Activated B cell treated with CpG ODN at 0.5 μM for 24 hours (primary cell): ENCODE measurements at regions of chr6 and their contacts with region 1.

Region 1: DNA sequence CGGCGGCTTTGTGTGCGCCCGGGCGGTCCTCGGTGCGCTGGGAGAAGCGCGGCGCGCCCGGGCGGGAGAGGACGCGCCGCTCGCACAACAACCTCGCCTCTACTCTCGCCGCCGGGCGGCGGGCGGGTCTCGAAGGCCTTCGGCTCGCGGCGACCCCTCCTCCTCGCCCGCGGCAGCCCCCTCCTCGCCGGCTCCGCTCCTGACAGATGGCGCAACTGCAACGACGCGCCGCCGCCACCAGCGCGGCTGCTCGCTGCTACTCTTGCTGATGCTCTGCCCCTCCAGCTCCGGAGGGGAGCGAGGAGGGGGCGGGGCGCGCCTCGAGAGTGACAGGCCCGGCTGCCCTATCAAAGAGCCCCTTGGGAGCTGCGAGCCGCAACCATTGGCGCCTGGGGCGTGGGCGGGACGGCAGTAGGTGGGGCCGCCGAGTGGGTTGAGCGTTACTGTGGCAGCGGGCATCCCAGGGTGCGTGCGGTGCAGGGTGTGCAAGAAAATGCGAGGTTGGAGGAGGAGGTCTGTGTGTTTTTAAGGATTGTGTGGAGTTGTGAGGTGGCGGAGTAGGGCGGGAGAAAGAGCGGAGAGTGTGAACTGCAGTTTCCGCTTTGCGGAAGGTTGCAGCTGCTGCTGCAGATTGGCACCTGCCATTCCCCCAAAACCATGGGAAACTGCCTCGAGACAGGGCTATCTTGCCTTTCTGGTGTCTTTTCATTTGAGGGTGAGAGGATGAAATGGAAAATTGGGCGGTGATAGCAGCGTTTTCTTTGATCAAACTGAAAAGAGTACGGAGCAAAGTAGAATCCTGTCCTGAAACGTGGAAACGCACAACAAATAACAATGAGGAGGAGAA is at the start of gene FYN:
- DNase-seq: peak; percentile 97
- ATAC-seq: peak; percentile 94
- H3K4me3 Mint-ChIP-seq: peak within 1 kb of the TSS; percentile 93
- H3K27ac Mint-ChIP-seq: peak within 1 kb of the TSS; percentile 90
- H3K4me1 Mint-ChIP-seq: peaks cover 44% of the 10 kb centered on the region
- H3K27me3 Mint-ChIP-seq: no peaks in the 10 kb centered on the region
- CTCF ChIP-seq: no peak
- total RNA-seq, gene FYN: 57.8 and 64.7 TPM in 2 replicates

Region 2: GRCh38 chr6:111259089-111259831 is 614.1 kb before region 1 on chr6:
- CTCF ChIA-PET with region 1: no interaction called
- POLR2A ChIA-PET with region 1: no interaction called
- intact Hi-C with region 1: loop called (anchors 1 kb)
- DNase-seq: peak; percentile 97
- ATAC-seq: peak; percentile 93
- H3K4me3 Mint-ChIP-seq: peak overlapping the region; percentile 84
- H3K27ac Mint-ChIP-seq: peak overlapping the region; percentile 87
- H3K4me1 Mint-ChIP-seq: peaks cover 30% of the 10 kb centered on the region
- H3K27me3 Mint-ChIP-seq: no peaks in the 10 kb centered on the region
- CTCF ChIP-seq: peak; percentile 89

Region 3: DNA sequence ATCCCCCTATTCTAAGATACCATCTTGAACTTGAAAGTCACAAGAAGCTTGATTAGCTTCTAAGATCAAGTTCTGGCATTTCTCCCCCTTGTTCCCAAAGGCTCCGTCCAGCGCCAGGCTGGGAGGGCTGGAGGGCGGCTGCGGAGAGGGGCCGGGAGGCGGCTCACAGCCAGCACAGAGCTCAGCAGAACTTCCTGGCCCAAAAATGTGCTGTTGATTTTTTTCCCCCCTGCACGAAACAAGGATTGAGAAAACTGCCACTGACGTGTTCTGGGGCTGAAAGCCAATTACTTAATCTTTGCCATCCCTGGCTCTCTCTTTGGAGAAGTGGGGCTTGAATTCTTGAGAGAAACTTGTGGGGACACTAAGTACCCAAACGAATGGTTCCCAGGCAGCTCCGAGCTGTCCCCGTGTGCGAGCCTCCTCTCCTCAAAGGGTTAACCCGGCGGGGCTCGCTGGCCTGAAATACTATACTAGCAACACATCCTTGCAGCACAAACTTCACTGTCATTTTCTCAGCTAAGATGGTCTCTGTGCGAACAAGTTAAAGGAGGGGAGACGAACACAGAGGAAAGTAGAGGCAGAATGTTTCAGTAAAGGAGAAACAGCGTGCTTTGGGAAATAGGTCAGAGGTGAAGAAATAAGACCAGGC is 268.2 kb before region 1 on chr6:
- CTCF ChIA-PET with region 1: no interaction called
- POLR2A ChIA-PET with region 1: interaction called, 3 read pairs
- intact Hi-C with region 1: loop called (anchors 10 kb)
- DNase-seq: peak; percentile 23
- ATAC-seq: peak; percentile 43
- H3K4me3 Mint-ChIP-seq: peak overlapping the region; percentile 90
- H3K27ac Mint-ChIP-seq: peak overlapping the region; percentile 92
- H3K4me1 Mint-ChIP-seq: peaks cover 44% of the 10 kb centered on the region
- H3K27me3 Mint-ChIP-seq: no peaks in the 10 kb centered on the region
- CTCF ChIP-seq: no peak

Region 4: GRCh38 chr6:111721753-111722154 is 151.6 kb before region 1 on chr6:
- CTCF ChIA-PET with region 1: interaction called, 3 read pairs
- POLR2A ChIA-PET with region 1: no interaction called
- intact Hi-C with region 1: loop called (anchors 2 kb)
- DNase-seq: no peak
- ATAC-seq: peak; percentile 43
- H3K4me3 Mint-ChIP-seq: no peak overlapping the region
- H3K27ac Mint-ChIP-seq: peak overlapping the region; percentile 7
- H3K4me1 Mint-ChIP-seq: peaks cover 45% of the 10 kb centered on the region
- H3K27me3 Mint-ChIP-seq: no peaks in the 10 kb centered on the region
- CTCF ChIP-seq: no peak

Region 5: DNA sequence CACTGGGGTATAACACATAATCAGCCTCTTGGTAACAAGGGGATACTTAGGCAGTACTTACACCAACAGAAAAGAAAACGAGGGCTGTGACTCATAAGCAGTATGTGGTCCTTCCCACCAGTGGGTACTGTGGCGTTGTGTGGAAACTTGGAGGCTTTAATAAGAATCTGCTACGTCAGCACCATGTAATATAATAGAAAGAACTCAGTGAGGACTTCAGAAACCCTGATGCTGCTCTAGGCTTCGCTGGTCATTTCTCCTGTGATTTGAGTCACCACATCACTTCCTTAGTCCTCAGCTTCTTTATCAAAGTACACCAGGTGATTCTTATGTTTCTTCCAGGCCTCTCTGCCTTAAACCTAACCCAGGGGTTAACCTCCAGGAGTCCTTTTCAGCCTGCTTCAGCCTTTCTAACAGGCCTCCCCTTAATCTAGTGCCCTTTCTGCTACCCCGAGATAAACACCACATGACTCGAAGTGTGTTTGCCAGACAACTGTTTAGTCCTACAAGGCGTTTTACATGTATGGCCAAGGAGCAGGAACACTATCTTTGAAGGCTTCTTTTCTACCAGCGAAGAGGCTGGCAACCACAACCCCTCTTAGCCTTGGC is 68.7 kb before region 1 on chr6:
- CTCF ChIA-PET with region 1: interaction called, 9 read pairs
- POLR2A ChIA-PET with region 1: interaction called, 10 read pairs
- intact Hi-C with region 1: loop called (anchors 1 kb)
- DNase-seq: no peak
- ATAC-seq: peak; percentile 69
- H3K4me3 Mint-ChIP-seq: peak overlapping the region; percentile 55
- H3K27ac Mint-ChIP-seq: peak overlapping the region; percentile 90
- H3K4me1 Mint-ChIP-seq: peaks cover 53% of the 10 kb centered on the region
- H3K27me3 Mint-ChIP-seq: no peaks in the 10 kb centered on the region
- CTCF ChIP-seq: no peak

Region 6: DNA sequence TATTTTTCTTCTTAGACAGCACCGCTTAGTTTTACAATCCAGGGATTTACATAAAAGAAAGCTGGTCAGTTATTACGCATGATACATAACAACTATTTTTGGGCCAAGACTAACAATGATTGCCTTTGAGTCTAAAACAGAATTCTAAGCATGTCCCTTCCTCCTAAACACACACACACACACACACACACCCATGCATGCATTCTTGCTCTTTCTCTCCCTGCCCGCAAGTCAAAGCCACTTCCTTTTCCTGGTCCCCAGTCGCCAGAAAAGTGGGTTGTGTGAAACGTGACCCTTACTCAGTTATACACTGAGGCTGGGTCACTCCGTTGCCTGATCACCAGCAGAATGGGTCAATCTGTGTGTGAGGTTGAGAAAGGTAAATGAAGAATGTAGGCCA is 31.6 kb before region 1 on chr6:
- CTCF ChIA-PET with region 1: interaction called, 6 read pairs
- POLR2A ChIA-PET with region 1: interaction called, 16 read pairs
- intact Hi-C with region 1: loop called (anchors 1 kb)
- DNase-seq: no peak
- ATAC-seq: no peak
- H3K4me3 Mint-ChIP-seq: no peak overlapping the region
- H3K27ac Mint-ChIP-seq: no peak overlapping the region
- H3K4me1 Mint-ChIP-seq: peaks cover 24% of the 10 kb centered on the region
- H3K27me3 Mint-ChIP-seq: no peaks in the 10 kb centered on the region
- CTCF ChIP-seq: no peak

Region 7: DNA sequence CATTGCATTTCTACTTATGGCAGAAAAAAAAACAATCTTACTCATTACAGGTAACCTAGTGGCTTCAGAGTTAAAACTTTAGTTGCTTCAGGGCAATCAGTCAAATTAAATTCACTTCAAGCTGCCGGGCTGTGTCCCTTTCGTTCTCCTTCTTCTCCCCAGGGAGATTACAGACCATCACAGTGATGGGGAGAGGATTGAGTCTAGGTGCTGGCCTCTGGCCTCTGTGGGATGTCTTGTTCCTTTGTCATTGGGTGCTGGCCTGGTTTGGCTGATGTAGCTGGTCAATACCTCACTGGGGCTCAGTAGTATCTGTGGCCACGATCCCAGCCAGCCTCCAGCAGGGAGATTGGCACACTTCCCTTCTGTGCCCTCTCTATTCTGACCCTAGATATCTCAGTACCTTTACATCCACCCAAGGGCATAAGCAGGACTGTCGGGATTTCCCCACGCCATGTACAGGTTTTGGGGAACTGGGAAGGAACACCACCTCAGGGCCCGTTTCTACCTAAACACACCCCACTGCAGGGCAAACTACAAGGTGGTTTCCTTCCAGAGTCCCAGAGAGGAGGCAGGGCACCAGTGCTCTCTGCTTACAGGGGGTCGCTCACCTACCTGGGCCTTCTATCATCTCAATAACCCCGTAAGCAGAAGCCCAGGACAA is 15.6 kb before region 1 on chr6:
- CTCF ChIA-PET with region 1: no interaction called
- POLR2A ChIA-PET with region 1: no interaction called
- intact Hi-C with region 1: no loop called
- DNase-seq: no peak
- ATAC-seq: no peak
- H3K4me3 Mint-ChIP-seq: no peak overlapping the region
- H3K27ac Mint-ChIP-seq: no peak overlapping the region
- H3K4me1 Mint-ChIP-seq: peaks cover 17% of the 10 kb centered on the region
- H3K27me3 Mint-ChIP-seq: no peaks in the 10 kb centered on the region
- CTCF ChIP-seq: no peak

Region 8: GRCh38 chr6:111894272-111894671 is 20.9 kb after region 1 on chr6:
- CTCF ChIA-PET with region 1: no interaction called
- POLR2A ChIA-PET with region 1: no interaction called
- intact Hi-C with region 1: no loop called
- DNase-seq: no peak
- ATAC-seq: no peak
- H3K4me3 Mint-ChIP-seq: no peak overlapping the region
- H3K27ac Mint-ChIP-seq: no peak overlapping the region
- H3K4me1 Mint-ChIP-seq: no peaks in the 10 kb centered on the region
- H3K27me3 Mint-ChIP-seq: peaks cover 2% of the 10 kb centered on the region
- CTCF ChIP-seq: no peak

Region 9: DNA sequence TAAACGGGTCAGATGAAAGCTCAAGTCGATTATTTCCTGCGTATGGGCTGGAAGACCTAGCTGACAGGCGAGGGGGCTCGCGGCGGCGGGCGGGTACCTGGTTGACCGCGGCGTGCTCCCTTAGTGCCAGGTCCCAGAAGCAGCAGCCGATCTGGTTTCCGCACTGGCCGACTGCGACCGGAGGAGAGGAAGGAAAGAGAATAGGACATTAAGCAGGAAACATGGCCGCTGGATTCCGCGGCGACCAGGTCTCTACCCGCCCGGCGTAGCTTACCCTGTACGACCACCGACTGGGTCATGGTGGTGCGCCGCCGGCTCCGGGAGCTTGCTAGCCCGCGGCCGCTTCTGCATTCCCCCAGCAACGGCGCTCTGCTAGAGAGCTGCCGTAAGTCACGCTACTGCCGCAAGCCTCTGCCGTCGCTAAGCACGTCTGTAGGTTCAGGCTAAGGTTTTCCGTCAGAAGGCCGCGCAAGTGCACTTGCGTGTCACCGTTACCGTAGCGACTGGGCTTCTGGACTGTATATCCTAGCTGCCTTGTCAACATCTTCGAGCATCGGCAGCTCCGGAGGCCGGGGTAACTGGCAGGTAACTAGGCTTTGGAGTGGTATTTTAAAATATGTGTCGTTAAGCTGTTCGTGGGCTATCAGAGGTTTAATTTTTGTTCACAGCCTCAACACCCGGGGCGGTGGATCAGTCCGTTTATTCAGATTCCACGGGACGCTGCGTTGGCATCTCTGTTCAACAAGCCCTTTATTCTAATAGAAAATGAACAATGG is 213.9 kb after region 1 on chr6 and contains the starts of genes FAM229B and TUBE1:
- CTCF ChIA-PET with region 1: no interaction called
- POLR2A ChIA-PET with region 1: no interaction called
- intact Hi-C with region 1: loop called (anchors 1 kb)
- DNase-seq: peak; percentile 74
- ATAC-seq: peak; percentile 96
- H3K4me3 Mint-ChIP-seq: no peak within 1 kb of the TSS
- H3K27ac Mint-ChIP-seq: no peak within 1 kb of the TSS
- H3K4me1 Mint-ChIP-seq: no peaks in the 10 kb centered on the region
- H3K27me3 Mint-ChIP-seq: peaks cover 14% of the 10 kb centered on the region
- CTCF ChIP-seq: no peak
- total RNA-seq, gene FAM229B: 2.0 and 2.6 TPM in 2 replicates
- total RNA-seq, gene TUBE1: 24.1 and 28.0 TPM in 2 replicates